OCI-LY7 (cell line): ENCODE measurements at regions of chr1 and their contacts with region 1.

Region 1: GRCh38 chr1:103106426-103107341 is 1.6 kb downstream of the COL11A1 start:
- DNase-seq: peak; percentile 25
- H3K4me3 ChIP-seq: no peak overlapping the region
- H3K27ac ChIP-seq: no peak overlapping the region
- H3K4me1 ChIP-seq: no peaks in the 10 kb centered on the region
- CTCF ChIP-seq: peak; percentile 78

Region 2: GRCh38 chr1:103084181-103084580 is 22.5 kb before region 1 on chr1:
- CTCF ChIA-PET with region 1: no interaction called
- POLR2A ChIA-PET with region 1: no interaction called
- intact Hi-C with region 1: no loop called
- DNase-seq: no peak
- H3K4me3 ChIP-seq: no peak overlapping the region
- H3K27ac ChIP-seq: no peak overlapping the region
- H3K4me1 ChIP-seq: no peaks in the 10 kb centered on the region
- CTCF ChIP-seq: no peak

Region 3: DNA sequence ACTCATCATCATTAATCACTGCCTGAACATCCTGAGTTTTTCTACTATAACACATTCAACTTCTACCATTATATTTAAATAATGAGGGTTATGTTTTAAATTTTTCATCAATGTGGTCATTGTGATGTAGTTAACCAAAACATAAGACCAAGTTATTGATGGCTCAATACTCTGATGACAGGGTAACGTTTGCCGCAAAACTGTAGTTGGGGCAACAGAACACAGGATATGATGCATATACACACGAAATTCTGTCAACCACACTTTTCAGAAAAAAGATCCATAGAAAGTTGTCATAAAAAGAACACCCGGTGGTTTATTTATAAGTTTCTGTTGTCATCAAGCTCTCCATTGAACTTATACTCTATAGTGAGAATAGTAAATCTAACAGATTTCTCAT is 123.4 kb after region 1 on chr1:
- CTCF ChIA-PET with region 1: no interaction called
- POLR2A ChIA-PET with region 1: no interaction called
- intact Hi-C with region 1: loop called (anchors 10 kb)
- DNase-seq: no peak
- H3K4me3 ChIP-seq: no peak overlapping the region
- H3K27ac ChIP-seq: no peak overlapping the region
- H3K4me1 ChIP-seq: no peaks in the 10 kb centered on the region
- CTCF ChIP-seq: no peak

Region 4: GRCh38 chr1:103461161-103462105 is 354.7 kb after region 1 on chr1:
- CTCF ChIA-PET with region 1: no interaction called
- POLR2A ChIA-PET with region 1: no interaction called
- intact Hi-C with region 1: loop called (anchors 5 kb)
- DNase-seq: peak; percentile 25
- H3K4me3 ChIP-seq: no peak overlapping the region
- H3K27ac ChIP-seq: no peak overlapping the region
- H3K4me1 ChIP-seq: no peaks in the 10 kb centered on the region
- CTCF ChIP-seq: peak; percentile 91